Testis (tissue), 5 donors: ENCODE measurements at regions of chr1 and their contacts with region 1.

Region 1: DNA sequence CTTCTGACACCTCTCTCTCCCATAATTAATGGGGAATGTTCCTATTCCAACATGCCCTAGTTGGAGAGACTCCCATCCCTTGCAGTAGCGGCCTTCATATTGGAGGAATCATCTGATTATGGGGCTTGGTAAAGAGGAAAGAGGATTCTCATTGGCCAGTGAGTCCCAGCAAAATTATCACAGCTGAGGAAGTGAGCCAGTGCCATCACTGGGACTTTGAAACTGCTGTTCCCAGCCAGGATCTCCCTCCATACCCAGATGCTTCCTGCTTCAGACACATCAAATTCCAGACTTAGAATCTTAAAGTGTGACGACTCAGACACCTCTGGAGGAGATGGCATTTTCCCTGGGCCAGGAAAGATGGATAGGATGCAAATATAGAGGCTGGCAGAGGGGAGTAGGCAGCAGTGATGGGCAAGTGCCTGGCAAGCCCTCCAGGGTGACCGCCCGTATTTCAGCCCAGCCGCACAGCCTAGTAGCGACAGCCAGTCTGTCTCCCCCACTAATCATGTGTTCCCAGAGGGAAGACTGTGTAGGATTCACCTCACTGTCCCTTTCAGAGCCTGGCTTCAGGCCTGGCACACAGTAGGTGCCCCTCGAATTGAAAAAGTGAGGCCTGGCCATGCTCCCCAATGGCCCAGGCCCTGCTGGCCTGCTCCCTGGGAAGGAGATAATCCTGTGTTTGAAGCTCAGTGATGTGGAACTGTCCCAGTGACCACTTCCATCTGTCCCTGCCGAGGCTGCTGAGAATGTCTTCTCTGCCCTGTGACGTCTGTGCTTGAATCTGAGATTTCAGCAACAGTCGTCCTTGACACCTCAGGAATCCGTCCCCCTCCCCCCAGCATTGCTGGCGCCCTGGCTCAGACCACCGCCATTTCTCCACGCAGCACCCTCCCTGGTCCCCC is 41.2 kb upstream of the MAGOH start:
- DNase-seq: no peak
- H3K4me3 ChIP-seq: no peak overlapping the region
- H3K27ac ChIP-seq: no peak overlapping the region
- H3K4me1 ChIP-seq: no peaks in the 10 kb centered on the region
- H3K27me3 ChIP-seq: no peaks in the 10 kb centered on the region
- CTCF ChIP-seq: no peak
- POLR2A ChIP-seq: no peak

Region 2: DNA sequence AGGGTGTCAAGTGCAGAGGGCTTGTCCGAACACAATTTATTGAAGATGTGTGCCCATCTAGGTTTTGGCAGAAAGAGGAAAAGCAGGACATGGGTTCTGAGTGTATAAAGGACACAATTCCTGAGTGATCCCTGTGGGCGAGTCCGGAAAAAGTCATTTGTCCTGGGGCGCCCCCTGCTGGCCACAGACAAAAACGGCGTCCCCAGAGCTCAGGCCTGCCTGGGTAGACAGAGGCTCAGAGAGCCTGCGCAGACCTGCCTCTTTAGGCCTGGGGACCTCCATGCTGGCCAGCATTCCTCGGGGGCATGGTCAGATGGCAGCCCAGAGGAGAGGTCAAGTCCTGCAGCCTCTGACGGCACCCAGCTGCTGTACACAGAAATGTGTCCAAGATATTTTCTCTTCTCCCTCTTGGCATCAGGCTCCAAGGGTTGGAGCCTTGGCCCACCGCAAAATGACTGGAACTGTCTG is 113.8 kb after region 1 on chr1:
- intact Hi-C with region 1: loop called (anchors 5 kb)
- DNase-seq: peak; percentile 89
- H3K4me3 ChIP-seq: no peak overlapping the region
- H3K27ac ChIP-seq: no peak overlapping the region
- H3K4me1 ChIP-seq: peaks cover 7% of the 10 kb centered on the region
- H3K27me3 ChIP-seq: no peaks in the 10 kb centered on the region
- CTCF ChIP-seq: peak; percentile 95 to 99 (median 97)
- POLR2A ChIP-seq: no peak